Activated CD4-positive, alpha-beta memory T cell treated with anti-CD3 and anti-CD28 coated beads, Interleukin-2, amount 10 ng/mL, durations not matched to agents 7 days and 5 days (primary cell): ENCODE measurements at regions of chr15 and their contacts with region 1.

Region 1: DNA sequence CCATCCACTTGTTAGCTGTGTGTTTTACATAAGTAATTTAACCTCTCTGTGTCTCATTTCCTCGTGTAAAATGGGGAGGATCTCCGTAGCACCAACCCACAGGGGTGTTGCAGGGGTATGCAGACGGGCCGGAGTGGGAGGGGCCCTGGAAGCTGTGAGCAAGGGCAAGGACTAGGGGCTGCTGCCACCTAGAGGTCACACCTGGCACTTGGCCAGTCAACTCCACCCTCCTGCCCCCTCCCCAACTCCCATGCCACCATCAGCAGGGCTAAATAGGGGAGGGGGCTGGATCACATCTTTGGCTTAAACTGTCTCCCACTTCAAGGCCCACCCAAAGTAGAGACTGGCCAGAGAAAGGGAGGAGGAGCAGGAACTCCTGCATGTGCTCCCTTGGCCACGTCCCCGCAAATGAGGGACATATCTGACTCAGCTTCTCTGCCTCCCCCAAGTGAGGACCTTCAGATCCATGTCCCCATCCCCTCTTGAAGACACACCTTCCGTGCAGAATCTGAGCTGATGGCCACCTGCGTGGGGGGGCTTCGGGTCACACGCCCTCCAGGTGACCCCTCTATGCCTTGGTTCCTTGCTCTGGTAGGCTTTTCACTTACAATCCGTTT is 2.6 kb downstream of the CCDC9B start:
- DNase-seq: peak; percentile 80
- H3K4me3 Mint-ChIP-seq: no peak overlapping the region
- H3K27ac Mint-ChIP-seq: no peak overlapping the region
- H3K4me1 Mint-ChIP-seq: peaks cover 24% of the 10 kb centered on the region
- H3K27me3 Mint-ChIP-seq: no peaks in the 10 kb centered on the region

Region 2: GRCh38 chr15:40217159-40217824 is 120.9 kb before region 1 on chr15:
- CTCF ChIA-PET with region 1: interaction called, 17 read pairs
- POLR2A ChIA-PET with region 1: no interaction called
- DNase-seq: peak; percentile 32
- H3K4me3 Mint-ChIP-seq: no peak overlapping the region
- H3K27ac Mint-ChIP-seq: no peak overlapping the region
- H3K4me1 Mint-ChIP-seq: no peaks in the 10 kb centered on the region
- H3K27me3 Mint-ChIP-seq: no peaks in the 10 kb centered on the region

Region 3: DNA sequence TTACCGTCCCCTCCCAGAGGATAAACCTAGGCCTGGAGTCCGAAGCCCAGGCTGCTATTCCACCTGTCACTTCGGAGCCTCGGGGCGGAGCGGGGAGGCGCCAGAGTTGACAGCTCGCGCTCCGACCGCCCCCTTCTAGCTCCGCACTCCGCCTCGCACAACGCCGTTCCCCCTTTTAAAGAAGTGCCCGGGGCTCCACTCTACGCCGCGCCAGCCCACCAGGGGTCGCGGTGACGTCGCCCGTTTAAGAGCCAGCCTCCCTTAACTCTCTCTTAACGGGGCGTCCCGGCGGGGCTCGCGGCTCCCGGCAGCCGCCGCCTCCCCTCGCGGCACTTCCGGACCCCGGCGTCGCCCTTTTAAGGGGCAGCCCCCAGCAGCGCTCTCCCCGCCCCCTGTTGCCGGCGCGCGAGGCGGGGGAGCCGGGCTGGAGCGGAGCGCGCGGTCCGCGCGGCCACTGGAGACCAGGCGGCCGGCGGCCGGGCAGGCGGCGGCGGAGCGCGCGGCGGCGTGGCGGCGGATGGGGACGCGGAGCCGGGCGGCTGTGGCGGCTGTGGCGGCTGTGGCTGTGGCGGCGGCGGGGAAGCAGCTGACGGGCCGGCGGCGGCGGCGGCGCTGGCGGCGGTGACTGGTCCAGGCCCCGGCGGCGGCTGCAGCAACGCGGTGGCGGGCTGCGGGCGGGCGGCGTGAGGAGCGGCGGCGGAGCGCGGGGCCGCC is 14.8 kb before region 1 on chr15 and contains the start of gene INAFM2:
- CTCF ChIA-PET with region 1: interaction called, 100 read pairs
- POLR2A ChIA-PET with region 1: interaction called, 14 read pairs
- DNase-seq: peak; percentile 89
- H3K4me3 Mint-ChIP-seq: peak within 1 kb of the TSS; percentile 63
- H3K27ac Mint-ChIP-seq: no peak within 1 kb of the TSS
- H3K4me1 Mint-ChIP-seq: peaks cover 34% of the 10 kb centered on the region
- H3K27me3 Mint-ChIP-seq: peaks cover 11% of the 10 kb centered on the region
- total RNA-seq, gene INAFM2: 8.7 to 8.9 TPM

Region 4: GRCh38 chr15:40357723-40358470 is 19.7 kb after region 1 on chr15 and contains the start of gene DISP2:
- CTCF ChIA-PET with region 1: interaction called, 30 read pairs
- POLR2A ChIA-PET with region 1: no interaction called
- DNase-seq: peak; percentile 93
- H3K4me3 Mint-ChIP-seq: peak within 1 kb of the TSS; percentile 72
- H3K27ac Mint-ChIP-seq: no peak within 1 kb of the TSS
- H3K4me1 Mint-ChIP-seq: peaks cover 11% of the 10 kb centered on the region
- H3K27me3 Mint-ChIP-seq: peaks cover 18% of the 10 kb centered on the region
- total RNA-seq, gene DISP2: 0.03 to 0.18 TPM

Region 5: DNA sequence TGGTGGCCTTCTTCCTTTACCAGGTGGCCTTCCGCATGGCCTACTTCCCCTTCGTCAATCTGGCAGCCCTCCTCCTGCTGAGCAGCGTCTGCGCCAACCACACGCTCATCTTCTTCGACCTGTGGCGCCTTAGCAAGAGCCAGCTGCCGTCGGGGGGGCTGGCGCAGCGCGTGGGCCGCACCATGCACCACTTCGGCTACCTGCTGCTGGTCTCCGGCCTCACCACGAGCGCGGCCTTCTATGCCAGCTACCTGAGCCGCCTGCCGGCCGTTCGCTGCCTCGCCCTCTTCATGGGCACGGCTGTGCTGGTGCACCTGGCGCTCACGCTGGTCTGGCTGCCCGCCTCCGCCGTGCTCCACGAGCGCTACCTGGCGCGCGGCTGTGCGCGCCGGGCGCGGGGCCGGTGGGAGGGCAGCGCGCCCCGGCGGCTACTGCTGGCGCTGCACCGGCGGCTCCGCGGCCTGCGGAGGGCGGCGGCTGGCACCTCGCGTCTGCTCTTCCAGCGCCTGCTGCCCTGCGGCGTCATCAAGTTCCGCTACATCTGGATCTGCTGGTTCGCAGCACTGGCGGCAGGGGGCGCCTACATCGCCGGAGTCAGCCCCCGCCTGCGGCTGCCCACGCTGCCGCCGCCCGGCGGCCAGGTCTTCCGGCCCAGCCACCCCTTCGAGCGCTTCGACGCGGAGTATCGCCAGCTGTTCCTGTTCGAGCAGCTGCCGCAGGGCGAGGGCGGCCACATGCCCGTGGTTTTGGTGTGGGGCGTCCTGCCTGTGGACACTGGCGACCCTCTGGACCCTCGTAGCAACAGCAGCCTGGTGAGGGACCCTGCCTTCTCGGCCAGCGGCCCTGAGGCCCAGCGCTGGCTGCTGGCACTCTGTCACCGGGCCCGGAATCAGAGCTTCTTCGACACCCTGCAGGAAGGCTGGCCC is 29.8 kb after region 1 on chr15:
- CTCF ChIA-PET with region 1: interaction called, 15 read pairs
- POLR2A ChIA-PET with region 1: no interaction called
- DNase-seq: peak; percentile 91
- H3K4me3 Mint-ChIP-seq: peak overlapping the region; percentile 77
- H3K27ac Mint-ChIP-seq: peak overlapping the region; percentile 56
- H3K4me1 Mint-ChIP-seq: peaks cover 20% of the 10 kb centered on the region
- H3K27me3 Mint-ChIP-seq: peaks cover 9% of the 10 kb centered on the region

Region 6: DNA sequence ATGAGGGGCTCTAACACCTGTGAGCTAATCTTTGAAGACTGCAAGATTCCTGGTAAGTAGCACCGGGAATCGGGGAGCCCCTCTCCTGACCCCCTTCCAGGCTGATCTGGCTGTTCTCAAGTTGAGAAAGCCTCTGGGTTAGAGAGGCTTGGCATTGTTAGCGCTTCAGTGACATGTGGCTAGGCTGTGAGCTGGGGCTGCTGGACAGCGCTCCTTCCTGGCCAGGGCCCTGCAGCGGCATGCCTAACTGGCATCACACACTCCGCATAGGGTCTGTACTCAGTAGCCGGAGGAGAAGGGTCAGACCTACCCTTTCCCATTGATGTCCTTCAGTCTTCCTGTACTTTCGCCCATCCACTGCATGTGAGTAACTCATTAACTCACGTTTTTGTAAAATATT is 74.9 kb after region 1 on chr15:
- CTCF ChIA-PET with region 1: interaction called, 10 read pairs
- POLR2A ChIA-PET with region 1: no interaction called
- DNase-seq: no peak
- H3K4me3 Mint-ChIP-seq: no peak overlapping the region
- H3K27ac Mint-ChIP-seq: no peak overlapping the region
- H3K4me1 Mint-ChIP-seq: peaks cover 18% of the 10 kb centered on the region
- H3K27me3 Mint-ChIP-seq: no peaks in the 10 kb centered on the region

Region 7: DNA sequence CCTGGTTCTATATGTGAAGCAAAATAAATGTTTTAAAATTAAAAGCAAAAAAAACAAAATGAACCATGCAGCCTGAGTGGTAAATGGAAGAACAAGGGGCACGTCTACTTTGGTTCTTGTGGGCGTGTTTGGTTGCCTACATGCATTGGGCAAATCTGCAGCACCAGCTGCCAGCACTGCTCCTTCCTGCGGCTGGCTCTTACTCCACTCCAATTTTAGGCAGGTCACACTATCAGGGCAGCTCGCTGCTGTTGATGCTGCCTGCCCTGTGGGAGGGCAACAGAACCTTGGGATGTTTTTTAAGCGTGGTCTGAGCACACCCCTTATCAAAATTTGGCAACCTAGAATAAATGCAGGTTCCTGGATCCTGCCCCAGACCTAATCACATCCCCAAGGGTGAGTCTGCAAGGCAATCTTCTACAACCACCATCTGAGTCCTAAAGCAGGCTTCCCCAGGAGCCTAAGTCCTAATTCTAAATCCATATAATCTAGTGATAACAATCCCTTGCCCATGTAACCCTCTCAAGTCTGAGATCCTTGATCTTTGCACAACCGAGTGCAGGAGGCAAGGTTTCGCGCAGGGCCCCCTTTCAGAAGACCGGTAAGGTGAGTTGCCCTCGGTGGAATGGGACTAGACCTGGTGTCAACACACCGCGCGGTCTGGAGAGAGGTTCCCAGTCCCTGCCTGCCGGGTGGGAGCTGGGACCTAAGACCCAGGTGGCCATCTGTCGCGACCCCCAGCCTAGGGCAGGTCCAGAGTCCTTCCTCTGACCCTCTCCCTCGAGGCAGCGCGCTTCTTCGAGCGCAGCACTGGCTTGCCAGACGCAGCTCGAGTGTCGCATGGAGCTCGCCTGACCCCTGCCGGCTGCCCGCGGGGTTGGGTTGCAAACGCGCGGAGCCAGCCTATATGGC is 83.4 kb after region 1 on chr15:
- CTCF ChIA-PET with region 1: interaction called, 143 read pairs
- POLR2A ChIA-PET with region 1: interaction called, 4 read pairs
- DNase-seq: peak; percentile 84
- H3K4me3 Mint-ChIP-seq: no peak overlapping the region
- H3K27ac Mint-ChIP-seq: no peak overlapping the region
- H3K4me1 Mint-ChIP-seq: peaks cover 2% of the 10 kb centered on the region
- H3K27me3 Mint-ChIP-seq: peaks cover 1% of the 10 kb centered on the region

Region 8: GRCh38 chr15:40660686-40661085 is 322.5 kb after region 1 on chr15:
- CTCF ChIA-PET with region 1: no interaction called
- POLR2A ChIA-PET with region 1: no interaction called
- DNase-seq: no peak
- H3K4me3 Mint-ChIP-seq: no peak overlapping the region
- H3K27ac Mint-ChIP-seq: no peak overlapping the region
- H3K4me1 Mint-ChIP-seq: no peaks in the 10 kb centered on the region
- H3K27me3 Mint-ChIP-seq: no peaks in the 10 kb centered on the region